Left ventricle myocardium inferior (tissue), 1 donor: ENCODE measurements at regions of chr10 and their contacts with region 1.

Region 1: GRCh38 chr10:18214691-18215563 is 74.7 kb downstream of the CACNB2 start:
- DNase-seq: peak; percentile 21
- H3K4me3 ChIP-seq: no peak overlapping the region
- H3K27ac ChIP-seq: no peak overlapping the region
- H3K4me1 ChIP-seq: peaks cover 33% of the 10 kb centered on the region
- H3K27me3 ChIP-seq: no peaks in the 10 kb centered on the region
- CTCF ChIP-seq: peak; percentile 81

Region 2: GRCh38 chr10:17737027-17737965 is 477.6 kb before region 1 on chr10:
- intact Hi-C with region 1: loop called (anchors 10 kb)
- DNase-seq: peak; percentile 43
- H3K4me3 ChIP-seq: no peak overlapping the region
- H3K27ac ChIP-seq: peak overlapping the region; percentile 15
- H3K4me1 ChIP-seq: peaks cover 25% of the 10 kb centered on the region
- H3K27me3 ChIP-seq: no peaks in the 10 kb centered on the region
- CTCF ChIP-seq: peak; percentile 72

Region 3: DNA sequence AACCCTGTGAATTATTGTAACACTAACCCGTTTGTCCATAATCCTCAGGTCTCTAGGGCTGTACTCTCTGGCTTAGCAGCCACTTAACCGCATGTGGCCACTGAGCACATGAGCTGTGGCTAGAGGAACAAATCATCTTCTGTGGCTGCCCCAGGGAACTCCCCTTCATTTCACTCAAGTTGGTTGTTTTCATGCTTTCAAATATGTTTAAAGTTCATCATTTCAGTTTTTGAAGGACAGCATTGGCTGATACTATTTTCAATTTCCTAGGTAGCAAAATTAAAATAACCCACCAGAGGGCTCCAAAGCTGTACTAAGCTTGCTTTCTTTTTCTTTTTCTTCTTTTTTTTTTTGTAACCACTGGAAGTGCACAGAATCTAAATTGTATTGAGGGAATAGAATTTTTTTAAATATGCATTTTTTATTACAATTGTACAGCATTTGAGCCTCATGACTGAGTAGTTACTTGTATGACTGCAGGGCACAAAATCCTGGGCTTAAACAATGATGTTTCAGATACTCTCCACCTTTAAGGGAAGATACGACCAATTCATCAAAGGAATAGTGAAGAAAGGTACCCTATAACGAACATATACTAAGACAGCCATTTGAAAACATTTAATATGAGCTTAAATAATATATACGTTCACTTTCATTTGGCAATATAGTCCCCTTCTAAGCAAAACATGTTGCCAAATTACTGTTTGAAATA is 367.2 kb before region 1 on chr10:
- intact Hi-C with region 1: loop called (anchors 5 kb)
- DNase-seq: no peak
- H3K4me3 ChIP-seq: no peak overlapping the region
- H3K27ac ChIP-seq: no peak overlapping the region
- H3K4me1 ChIP-seq: peaks cover 4% of the 10 kb centered on the region
- H3K27me3 ChIP-seq: no peaks in the 10 kb centered on the region
- CTCF ChIP-seq: peak; percentile 61

Region 4: DNA sequence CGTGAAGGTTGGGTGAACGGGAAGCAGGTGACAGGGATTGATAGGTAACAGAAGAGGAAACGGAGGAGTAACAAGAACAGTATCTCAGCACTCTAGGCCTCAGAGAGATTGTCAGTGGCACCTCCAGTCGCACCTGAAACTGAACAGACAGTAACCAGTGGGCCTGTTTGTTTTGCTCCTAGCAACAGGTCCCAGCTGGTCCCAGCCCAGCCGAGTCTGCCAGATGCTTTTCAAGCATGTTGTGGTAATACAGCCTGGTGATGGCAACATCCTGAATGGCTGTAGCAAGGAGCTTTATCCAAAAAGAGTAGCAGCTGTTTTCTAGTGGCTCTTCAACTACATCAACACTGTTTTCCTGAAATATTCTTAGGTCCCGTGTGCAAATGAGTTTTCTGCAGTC is 70.0 kb before region 1 on chr10:
- intact Hi-C with region 1: no loop called
- DNase-seq: peak; percentile 62
- H3K4me3 ChIP-seq: no peak overlapping the region
- H3K27ac ChIP-seq: peak overlapping the region; percentile 64
- H3K4me1 ChIP-seq: peaks cover 36% of the 10 kb centered on the region
- H3K27me3 ChIP-seq: peaks cover 18% of the 10 kb centered on the region
- CTCF ChIP-seq: no peak